ENCODE measurements at regions of chr2 and their contacts with region 1.

Region 1: DNA sequence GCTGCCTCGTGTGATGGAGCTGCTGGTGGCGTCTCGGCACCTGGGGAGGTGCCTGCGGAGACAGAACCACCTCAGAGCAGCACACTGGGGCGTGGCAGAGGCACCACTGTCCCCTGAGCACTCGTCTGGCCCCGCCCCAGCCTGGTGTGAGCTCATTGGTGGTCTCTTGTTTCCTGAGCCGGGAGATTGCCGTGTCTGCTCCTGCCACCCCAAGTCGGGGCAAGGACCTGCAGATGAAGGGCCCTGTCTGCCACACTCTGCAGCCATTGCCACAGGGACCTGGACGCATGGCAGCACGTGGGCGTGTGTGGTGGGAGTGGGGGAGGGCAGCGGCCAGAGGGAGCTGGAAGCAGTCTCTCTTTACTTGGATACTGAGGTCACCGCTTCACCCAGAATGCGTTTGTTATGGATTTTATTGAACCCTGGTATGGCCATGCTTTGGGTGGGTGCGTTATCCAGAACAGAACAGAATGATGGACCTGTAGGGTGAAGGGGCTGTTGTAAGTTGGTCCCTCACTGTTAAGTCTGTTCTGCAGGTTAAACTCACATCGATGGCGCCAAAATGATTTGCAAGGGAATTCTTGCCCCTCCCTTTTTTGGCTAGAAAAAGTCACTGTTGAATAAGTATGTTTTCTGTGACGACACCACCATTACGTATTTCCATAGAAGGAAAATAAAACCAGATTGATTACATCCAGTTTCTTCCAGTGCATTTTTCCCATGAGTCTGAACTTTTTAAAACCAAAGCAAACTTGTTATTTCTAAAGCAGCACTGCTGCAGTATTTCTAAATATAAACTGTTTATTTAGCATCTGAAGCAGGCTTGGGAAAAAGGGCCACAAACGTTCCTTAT is 92.0 kb downstream of the USP40 start:
- DNase-seq: no peak
- H3K4me3 ChIP-seq: no peak overlapping the region
- H3K27ac ChIP-seq: no peak overlapping the region
- H3K4me1 ChIP-seq: no peaks in the 10 kb centered on the region
- H3K27me3 ChIP-seq: no peaks in the 10 kb centered on the region
- CTCF ChIP-seq: no peak

Region 2: GRCh38 chr2:233489666-233490065 is 15.1 kb after region 1 on chr2:
- CTCF ChIA-PET with region 1: no interaction called
- POLR2A ChIA-PET with region 1: interaction called, 15 read pairs
- intact Hi-C with region 1: no loop called
- DNase-seq: no peak
- H3K4me3 ChIP-seq: no peak overlapping the region
- H3K27ac ChIP-seq: no peak overlapping the region
- H3K4me1 ChIP-seq: no peaks in the 10 kb centered on the region
- H3K27me3 ChIP-seq: no peaks in the 10 kb centered on the region
- CTCF ChIP-seq: no peak